ENCODE measurements at regions of chr5 and their contacts with region 1.

Region 1: GRCh38 chr5:80141147-80141671 is 106.1 kb downstream of the THBS4 start:
- DNase-seq: peak; percentile 61 to 71
- H3K4me3 ChIP-seq: peak overlapping the region in 1 of 4 experiments; percentile 23; a peak in 2 of 8 replicates
- H3K27ac ChIP-seq: peak overlapping the region; percentile 85
- H3K4me1 ChIP-seq: peaks cover 16 to 33% (median 26%) of the 10 kb centered on the region in 4 experiments
- H3K27me3 ChIP-seq: no peaks in the 10 kb centered on the region
- CTCF ChIP-seq: no peak
- EP300 ChIP-seq: no peak
- POLR2A ChIP-seq: peak in 1 of 2 experiments; percentile 60; a peak in 1 of 3 replicates
- RAD21 ChIP-seq: peak; percentile 3 to 25; a peak in 2 of 4 replicates

Region 2: GRCh38 chr5:80159133-80159815 is 18.1 kb after region 1 on chr5:
- CTCF ChIA-PET with region 1: interaction called, 6 read pairs
- POLR2A ChIA-PET with region 1: interaction called, 10 read pairs
- DNase-seq: no peak
- H3K4me3 ChIP-seq: peak overlapping the region in 1 of 4 experiments; percentile 14; a peak in 1 of 8 replicates
- H3K27ac ChIP-seq: peak overlapping the region; percentile 13; the same call in 1 of the 2 replicates
- H3K4me1 ChIP-seq: peaks cover 5 to 13% (median 9%) of the 10 kb centered on the region in 4 experiments; a peak in 4 of 7 replicates
- H3K27me3 ChIP-seq: no peaks in the 10 kb centered on the region
- CTCF ChIP-seq: no peak
- EP300 ChIP-seq: no peak
- POLR2A ChIP-seq: 0 out of 3 replicates have a peak, but pooled peaks of 1 of the 2 experiments have one; percentile 38
- RAD21 ChIP-seq: no peak

Region 3: GRCh38 chr5:80181618-80182211 is 40.5 kb after region 1 on chr5:
- CTCF ChIA-PET with region 1: interaction called, 4 read pairs
- POLR2A ChIA-PET with region 1: interaction called, 10 read pairs
- DNase-seq: no peak
- H3K4me3 ChIP-seq: no peak overlapping the region
- H3K27ac ChIP-seq: peak overlapping the region; percentile 39; the same call in 1 of the 2 replicates
- H3K4me1 ChIP-seq: peaks cover 21 to 41% (median 32%) of the 10 kb centered on the region in 4 experiments
- H3K27me3 ChIP-seq: no peaks in the 10 kb centered on the region
- CTCF ChIP-seq: no peak
- EP300 ChIP-seq: no peak
- POLR2A ChIP-seq: no peak
- RAD21 ChIP-seq: no peak